ENCODE measurements at regions of chr5 and their contacts with region 1.

Region 1: GRCh38 chr5:37837414-37838032 is 2.3 kb downstream of the GDNF start:
- DNase-seq: peak; percentile 91
- H3K4me3 ChIP-seq: peak overlapping the region; percentile 66 to 86 (median 73)
- H3K27ac ChIP-seq: peak overlapping the region; percentile 85 to 97 (median 95)
- H3K4me1 ChIP-seq: peaks cover 0 to 59% (median 42%) of the 10 kb centered on the region in 4 donors
- H3K27me3 ChIP-seq: peaks cover 0 to 6% (median 3%) of the 10 kb centered on the region in 3 donors
- CTCF ChIP-seq: peak; percentile 82 to 92 (median 84)
- EP300 ChIP-seq: no peak
- POLR2A ChIP-seq: no peak

Region 2: DNA sequence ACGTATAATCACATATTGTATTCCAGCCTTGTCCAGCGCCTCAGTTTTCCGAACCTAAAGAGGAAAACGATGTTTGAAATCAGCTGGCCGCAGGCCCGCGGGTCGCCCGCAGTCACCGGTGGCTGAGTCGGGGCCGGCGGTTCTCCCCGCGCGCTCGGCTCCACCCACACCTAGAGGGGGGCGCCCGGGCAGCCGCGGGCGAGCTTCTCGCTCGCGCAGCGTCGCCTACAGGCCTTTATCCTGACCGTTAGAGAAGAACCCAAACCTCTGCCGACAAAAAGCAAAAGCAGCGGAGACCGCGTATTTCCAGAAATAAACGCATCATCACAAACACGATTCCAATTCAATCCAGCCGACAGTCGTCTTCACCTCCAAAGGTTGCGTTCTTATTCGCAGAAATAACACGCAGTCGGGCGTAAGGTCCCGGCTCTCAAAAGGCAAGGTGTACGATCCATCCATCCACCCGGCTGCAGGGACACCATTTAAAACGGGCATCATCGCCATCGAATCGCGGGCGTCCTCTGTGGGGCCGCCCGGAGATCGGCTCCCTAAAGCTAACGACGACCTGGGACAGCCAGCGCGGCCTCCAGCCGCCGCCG is 961.6 kb before region 1 on chr5:
- intact Hi-C with region 1: loop called (anchors 5 kb)
- DNase-seq: peak; percentile 90
- H3K4me3 ChIP-seq: peak overlapping the region; percentile 68 to 90 (median 84)
- H3K27ac ChIP-seq: peak overlapping the region; percentile 93 to 98 (median 96)
- H3K4me1 ChIP-seq: peaks cover 0 to 51% (median 42%) of the 10 kb centered on the region in 4 donors
- H3K27me3 ChIP-seq: no peaks in the 10 kb centered on the region
- CTCF ChIP-seq: peak in 2 of 4 experiments; percentile 28 to 46
- EP300 ChIP-seq: no peak
- POLR2A ChIP-seq: no peak

Region 3: DNA sequence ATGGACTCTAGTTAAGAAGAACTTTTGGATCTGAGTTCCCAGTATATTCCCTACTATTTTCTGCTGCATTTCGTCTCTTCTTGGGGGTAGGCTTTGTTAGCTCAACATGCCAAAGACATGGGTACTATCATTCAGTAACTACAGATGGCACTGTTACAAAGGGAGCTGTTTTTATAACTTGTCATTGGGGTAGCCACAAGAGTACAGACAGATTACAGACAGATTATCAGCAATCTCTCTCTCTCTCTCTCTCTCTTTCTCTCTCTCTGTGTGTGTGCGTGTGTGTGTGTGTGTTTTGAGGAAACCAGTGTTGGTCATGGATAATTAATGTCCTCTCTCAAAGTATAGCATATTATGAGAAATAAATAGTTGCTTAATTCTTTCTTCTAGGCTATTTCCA is 342.3 kb before region 1 on chr5:
- intact Hi-C with region 1: loop called (anchors 1 kb)
- DNase-seq: no peak
- H3K4me3 ChIP-seq: no peak overlapping the region
- H3K27ac ChIP-seq: peak overlapping the region; percentile 54 to 83 (median 72)
- H3K4me1 ChIP-seq: peaks cover 0 to 29% (median 28%) of the 10 kb centered on the region in 4 donors
- H3K27me3 ChIP-seq: no peaks in the 10 kb centered on the region
- CTCF ChIP-seq: peak in 1 of 4 experiments; percentile 6
- EP300 ChIP-seq: no peak
- POLR2A ChIP-seq: no peak

Region 4: GRCh38 chr5:37668524-37669047 is 168.9 kb before region 1 on chr5:
- intact Hi-C with region 1: loop called (anchors 2 kb)
- DNase-seq: peak; percentile 89
- H3K4me3 ChIP-seq: no peak overlapping the region
- H3K27ac ChIP-seq: peak overlapping the region; percentile 34 to 85 (median 78)
- H3K4me1 ChIP-seq: peaks cover 0 to 72% (median 50%) of the 10 kb centered on the region in 4 donors
- H3K27me3 ChIP-seq: no peaks in the 10 kb centered on the region
- CTCF ChIP-seq: no peak
- EP300 ChIP-seq: peak in 2 of 4 donors; percentile 54 to 85
- POLR2A ChIP-seq: no peak

Region 5: GRCh38 chr5:37774912-37775483 is 62.5 kb before region 1 on chr5:
- intact Hi-C with region 1: loop called (anchors 1 kb)
- DNase-seq: no peak
- H3K4me3 ChIP-seq: no peak overlapping the region
- H3K27ac ChIP-seq: peak overlapping the region in 2 of 4 donors; percentile 87 to 93
- H3K4me1 ChIP-seq: peaks cover 0 to 51% (median 38%) of the 10 kb centered on the region in 4 donors
- H3K27me3 ChIP-seq: no peaks in the 10 kb centered on the region
- CTCF ChIP-seq: peak in 2 of 4 experiments; percentile 45 to 56
- EP300 ChIP-seq: no peak
- POLR2A ChIP-seq: no peak

Region 6: GRCh38 chr5:39074016-39074886 is 1236.7 kb after region 1 on chr5 and contains the start of gene RICTOR:
- intact Hi-C with region 1: loop called (anchors 10 kb)
- DNase-seq: peak; percentile 92
- H3K4me3 ChIP-seq: peak within 1 kb of the TSS; percentile 84 to 97 (median 91)
- H3K27ac ChIP-seq: peak within 1 kb of the TSS; percentile 95 to 100 (median 98)
- H3K4me1 ChIP-seq: peaks cover 0 to 45% (median 17%) of the 10 kb centered on the region in 4 donors
- H3K27me3 ChIP-seq: no peaks in the 10 kb centered on the region
- CTCF ChIP-seq: no peak
- EP300 ChIP-seq: no peak
- POLR2A ChIP-seq: no peak
- total RNA-seq, gene RICTOR: 32.8 to 50.1 (median 41.2) TPM